HepG2 (cell line): ENCODE measurements at regions of chr4 and their contacts with region 1.

Region 1: DNA sequence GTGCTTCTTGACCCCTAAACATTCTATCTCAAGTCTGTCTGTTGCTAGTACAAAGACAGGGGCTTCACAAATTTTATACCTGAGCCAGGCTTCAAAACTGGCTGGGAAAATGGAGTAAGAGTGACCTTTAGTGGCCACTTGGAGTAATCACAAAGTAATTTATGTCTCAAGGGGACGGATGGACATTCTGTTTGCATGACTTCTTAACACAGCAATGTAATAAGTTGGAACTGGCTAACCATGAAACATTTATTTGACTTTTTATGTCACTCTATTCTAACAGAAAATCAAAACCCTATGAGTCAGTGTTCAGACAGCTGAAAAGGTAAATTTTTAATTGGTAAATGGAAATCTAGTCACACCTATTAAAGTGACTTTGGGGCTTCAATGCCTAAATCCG is 600.6 kb downstream of the ANKRD50 start:
- DNase-seq: peak; percentile 55
- ATAC-seq: peak; percentile 84
- H3K4me3 ChIP-seq: no peak overlapping the region
- H3K27ac ChIP-seq: no peak overlapping the region
- H3K4me1 ChIP-seq: no peaks in the 10 kb centered on the region
- H3K27me3 ChIP-seq: no peaks in the 10 kb centered on the region
- CTCF ChIP-seq: peak; percentile 83
- EP300 ChIP-seq: no peak
- POLR2A ChIP-seq: no peak
- RAD21 ChIP-seq: peak; percentile 65

Region 2: GRCh38 chr4:122602277-122603142 is 1509.4 kb before region 1 on chr4:
- CTCF ChIA-PET with region 1: no interaction called
- POLR2A ChIA-PET with region 1: no interaction called
- in situ Hi-C with region 1: no loop called
- intact Hi-C with region 1: loop called (anchors 10 kb)
- DNase-seq: peak; percentile 36
- ATAC-seq: peak; percentile 92
- H3K4me3 ChIP-seq: no peak overlapping the region
- H3K27ac ChIP-seq: no peak overlapping the region
- H3K4me1 ChIP-seq: no peaks in the 10 kb centered on the region
- H3K27me3 ChIP-seq: no peaks in the 10 kb centered on the region; a peak in 1 of 5 replicates
- CTCF ChIP-seq: peak; percentile 61
- EP300 ChIP-seq: no peak
- POLR2A ChIP-seq: no peak
- RAD21 ChIP-seq: no peak

Region 3: DNA sequence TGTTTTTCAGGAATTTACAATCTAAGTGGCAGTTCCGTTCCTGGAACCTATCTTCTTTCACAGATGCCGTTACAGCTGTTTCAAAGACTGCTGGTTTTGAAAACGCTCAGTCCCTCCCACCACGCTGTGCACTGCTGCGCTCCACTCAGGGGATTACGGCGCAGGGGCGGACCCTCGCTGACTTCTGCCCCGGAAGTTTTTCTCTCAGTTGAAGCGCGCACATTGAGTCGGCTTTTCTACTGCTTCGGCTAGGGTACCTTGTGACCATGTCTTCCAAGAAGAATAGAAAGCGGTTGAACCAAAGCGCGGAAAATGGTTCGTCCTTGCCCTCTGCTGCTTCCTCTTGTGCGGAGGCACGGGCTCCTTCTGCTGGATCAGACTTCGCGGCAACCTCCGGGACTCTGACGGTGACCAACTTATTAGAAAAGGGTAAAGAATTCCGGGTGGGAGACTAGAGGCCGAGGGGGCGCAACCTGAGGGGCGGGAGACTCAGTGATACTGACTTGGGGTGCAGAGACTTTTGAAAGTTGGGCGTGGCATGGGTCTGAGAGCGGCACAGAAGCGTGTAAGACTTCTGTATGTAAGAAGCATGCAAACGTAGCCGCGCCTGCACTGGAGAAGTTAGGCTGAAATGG is 1188.9 kb before region 1 on chr4:
- CTCF ChIA-PET with region 1: no interaction called
- POLR2A ChIA-PET with region 1: no interaction called
- in situ Hi-C with region 1: no loop called
- intact Hi-C with region 1: loop called (anchors 5 kb)
- DNase-seq: peak; percentile 75
- ATAC-seq: peak; percentile 97
- H3K4me3 ChIP-seq: peak overlapping the region; percentile 89 to 95 (median 92)
- H3K27ac ChIP-seq: peak overlapping the region; percentile 89
- H3K4me1 ChIP-seq: peaks cover 42% of the 10 kb centered on the region
- H3K27me3 ChIP-seq: no peaks in the 10 kb centered on the region; a peak in 1 of 5 replicates
- CTCF ChIP-seq: no peak
- EP300 ChIP-seq: peak; percentile 17 to 45; a peak in 2 of 4 replicates
- POLR2A ChIP-seq: peak; percentile 45 to 55; a peak in 1 of 4 replicates
- RAD21 ChIP-seq: no peak

Region 4: DNA sequence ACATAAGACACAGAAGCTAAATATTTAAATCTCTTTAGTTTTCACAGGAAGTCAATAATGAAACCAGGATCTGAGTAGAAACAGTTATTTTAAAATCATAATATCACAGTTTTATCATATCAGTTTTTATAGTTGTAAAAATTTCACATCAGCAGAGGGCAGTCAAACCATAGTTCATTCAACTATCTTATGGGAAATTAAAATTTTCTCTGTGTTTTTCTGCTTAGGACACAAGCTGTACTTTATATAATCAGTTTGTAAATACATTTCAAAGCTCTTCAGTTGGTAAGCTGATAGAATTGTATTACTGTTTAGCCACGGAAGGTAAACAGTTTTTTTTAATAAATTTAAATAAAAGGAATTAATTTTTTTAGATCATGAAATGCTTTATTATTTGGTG is 984.7 kb before region 1 on chr4:
- CTCF ChIA-PET with region 1: no interaction called
- POLR2A ChIA-PET with region 1: no interaction called
- in situ Hi-C with region 1: no loop called
- intact Hi-C with region 1: loop called (anchors 5 kb)
- DNase-seq: no peak
- ATAC-seq: no peak
- H3K4me3 ChIP-seq: no peak overlapping the region
- H3K27ac ChIP-seq: no peak overlapping the region
- H3K4me1 ChIP-seq: peaks cover 6% of the 10 kb centered on the region; the same call in 1 of the 2 replicates
- H3K27me3 ChIP-seq: no peaks in the 10 kb centered on the region
- CTCF ChIP-seq: no peak; the same call in 1 of the 2 replicates
- EP300 ChIP-seq: no peak
- POLR2A ChIP-seq: no peak
- RAD21 ChIP-seq: no peak

Region 5: GRCh38 chr4:123564758-123565346 is 547.1 kb before region 1 on chr4:
- CTCF ChIA-PET with region 1: interaction called, 4 read pairs
- POLR2A ChIA-PET with region 1: no interaction called
- in situ Hi-C with region 1: loop called (anchors 25 kb)
- intact Hi-C with region 1: loop called (anchors 10 kb)
- DNase-seq: peak; percentile 92
- ATAC-seq: peak; percentile 100
- H3K4me3 ChIP-seq: no peak overlapping the region
- H3K27ac ChIP-seq: no peak overlapping the region
- H3K4me1 ChIP-seq: peaks cover 35% of the 10 kb centered on the region
- H3K27me3 ChIP-seq: no peaks in the 10 kb centered on the region
- CTCF ChIP-seq: peak; percentile 92
- EP300 ChIP-seq: peak in 1 of 2 experiments; percentile 63; a peak in 2 of 4 replicates
- POLR2A ChIP-seq: no peak
- RAD21 ChIP-seq: peak; percentile 89

Region 6: GRCh38 chr4:123770884-123771283 is 341.0 kb before region 1 on chr4:
- CTCF ChIA-PET with region 1: interaction called, 14 read pairs
- POLR2A ChIA-PET with region 1: no interaction called
- in situ Hi-C with region 1: loop called (anchors 5 kb)
- intact Hi-C with region 1: loop called (anchors 1 kb)
- DNase-seq: no peak
- ATAC-seq: no peak
- H3K4me3 ChIP-seq: no peak overlapping the region
- H3K27ac ChIP-seq: no peak overlapping the region
- H3K4me1 ChIP-seq: no peaks in the 10 kb centered on the region
- H3K27me3 ChIP-seq: no peaks in the 10 kb centered on the region
- CTCF ChIP-seq: no peak
- EP300 ChIP-seq: no peak
- POLR2A ChIP-seq: no peak
- RAD21 ChIP-seq: no peak

Region 7: GRCh38 chr4:123976285-123976684 is 135.6 kb before region 1 on chr4:
- CTCF ChIA-PET with region 1: no interaction called
- POLR2A ChIA-PET with region 1: no interaction called
- in situ Hi-C with region 1: no loop called
- intact Hi-C with region 1: no loop called
- DNase-seq: no peak
- ATAC-seq: no peak
- H3K4me3 ChIP-seq: no peak overlapping the region
- H3K27ac ChIP-seq: no peak overlapping the region
- H3K4me1 ChIP-seq: peaks cover 19% of the 10 kb centered on the region
- H3K27me3 ChIP-seq: no peaks in the 10 kb centered on the region
- CTCF ChIP-seq: no peak
- EP300 ChIP-seq: no peak
- POLR2A ChIP-seq: no peak
- RAD21 ChIP-seq: no peak